ENCODE measurements at regions of chr16 and their contacts with region 1.

Region 1: DNA sequence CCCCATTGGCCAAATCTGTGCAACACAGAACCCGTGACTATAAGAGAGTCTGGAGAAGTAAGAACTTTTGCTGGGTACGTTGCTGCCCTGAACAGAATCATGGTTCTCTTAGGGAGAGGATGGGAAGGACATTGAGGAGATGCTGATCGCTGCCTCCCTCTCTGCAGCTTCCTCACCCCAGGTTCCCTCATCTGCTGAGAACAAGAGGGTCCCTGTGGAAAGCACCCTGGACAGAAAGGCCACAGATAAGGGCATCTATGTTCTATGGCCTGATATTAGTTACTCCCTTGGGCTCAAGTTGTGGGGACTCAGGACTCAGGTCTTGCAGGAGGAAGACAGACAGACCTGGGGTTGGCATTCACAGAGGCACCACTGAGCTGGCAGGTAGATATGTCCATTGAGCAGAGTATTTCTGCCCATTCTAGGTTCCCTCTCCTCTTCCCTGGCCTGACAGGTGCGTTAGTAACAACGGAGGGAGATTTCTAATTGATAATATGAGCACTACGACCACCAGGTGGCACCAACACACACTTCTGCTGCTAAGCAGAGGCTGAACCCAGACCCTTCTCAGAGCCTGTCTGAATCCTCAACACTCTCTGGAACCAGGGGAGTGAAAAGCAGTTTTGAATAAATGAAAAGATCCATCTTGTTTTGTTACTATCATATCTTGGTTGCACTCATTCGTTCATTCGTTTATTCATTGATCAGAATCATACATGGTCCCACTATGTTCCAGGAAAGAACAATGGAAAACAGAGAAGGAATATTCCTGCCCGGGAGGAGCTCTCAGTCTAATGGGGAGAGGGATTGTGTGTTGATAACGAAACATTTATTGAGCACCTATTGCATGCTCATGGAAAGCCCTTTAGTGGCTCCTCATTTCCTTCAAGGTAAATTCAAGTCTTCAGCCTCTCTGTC is 56.4 kb downstream of the SLC6A2 start:
- DNase-seq: no peak
- H3K4me3 ChIP-seq: no peak overlapping the region
- H3K27ac ChIP-seq: no peak overlapping the region
- H3K4me1 ChIP-seq: no peaks in the 10 kb centered on the region
- H3K27me3 ChIP-seq: no peaks in the 10 kb centered on the region
- CTCF ChIP-seq: peak; percentile 57 to 80 (median 68)

Region 2: GRCh38 chr16:55842369-55843104 is 130.3 kb after region 1 on chr16:
- dilution Hi-C with region 1: loop called (anchors 25 kb)
- DNase-seq: no peak
- H3K4me3 ChIP-seq: no peak overlapping the region
- H3K27ac ChIP-seq: no peak overlapping the region
- H3K4me1 ChIP-seq: no peaks in the 10 kb centered on the region
- H3K27me3 ChIP-seq: peaks cover 7% of the 10 kb centered on the region
- CTCF ChIP-seq: peak; percentile 37 to 66 (median 57)

Measured in keratinocyte (primary cell).